ENCODE measurements at regions of chr9 and their contacts with region 1.

Region 1: DNA sequence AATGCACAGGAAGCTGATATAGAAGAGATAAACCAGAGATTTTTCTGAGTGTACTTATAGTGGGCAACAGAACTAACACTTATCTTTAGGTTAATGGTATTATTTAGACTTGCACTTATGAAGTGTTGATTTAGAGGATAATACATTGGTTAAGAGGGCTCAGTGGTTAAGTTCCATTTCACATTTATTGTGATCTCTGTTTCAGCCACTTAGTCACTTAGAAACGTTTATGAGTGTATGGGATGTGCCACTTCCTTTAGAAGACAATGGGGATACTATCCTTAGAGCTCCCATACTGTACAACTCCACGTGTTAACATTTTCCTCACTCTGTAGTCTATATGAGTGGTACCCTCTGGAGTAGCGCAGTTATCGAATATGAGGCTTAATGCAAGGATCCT is 57.5 kb downstream of the PIP5K1B start:
- DNase-seq: no peak
- ATAC-seq: peak; percentile 51; the same call in 2 of the 3 replicates
- H3K4me3 ChIP-seq: no peak overlapping the region
- H3K27ac ChIP-seq: no peak overlapping the region
- H3K4me1 ChIP-seq: peaks cover 3% of the 10 kb centered on the region; the same call in 1 of the 2 replicates
- H3K27me3 ChIP-seq: no peaks in the 10 kb centered on the region
- CTCF ChIP-seq: no peak
- EP300 ChIP-seq: no peak
- POLR2A ChIP-seq: no peak
- RAD21 ChIP-seq: no peak

Region 2: GRCh38 chr9:68715181-68715456 is 47.5 kb before region 1 on chr9:
- CTCF ChIA-PET with region 1: no interaction called
- POLR2A ChIA-PET with region 1: no interaction called
- RAD21 ChIA-PET with region 1: no interaction called
- SMC1A ChIA-PET with region 1: no interaction called
- in situ Hi-C with region 1: no loop called
- intact Hi-C with region 1: no loop called
- DNase-seq: no peak
- ATAC-seq: no peak
- H3K4me3 ChIP-seq: no peak overlapping the region
- H3K27ac ChIP-seq: no peak overlapping the region
- H3K4me1 ChIP-seq: 0 out of 2 replicates have a peak, but pooled peaks cover 3% of the 10 kb centered on the region
- H3K27me3 ChIP-seq: no peaks in the 10 kb centered on the region
- CTCF ChIP-seq: no peak
- EP300 ChIP-seq: no peak
- POLR2A ChIP-seq: no peak
- RAD21 ChIP-seq: no peak

Region 3: GRCh38 chr9:68744426-68744825 is 18.1 kb before region 1 on chr9:
- CTCF ChIA-PET with region 1: interaction called, 3 read pairs
- POLR2A ChIA-PET with region 1: no interaction called
- RAD21 ChIA-PET with region 1: no interaction called
- SMC1A ChIA-PET with region 1: interaction called, 5 read pairs
- in situ Hi-C with region 1: no loop called
- intact Hi-C with region 1: loop called (anchors 2 kb)
- DNase-seq: no peak
- ATAC-seq: no peak
- H3K4me3 ChIP-seq: no peak overlapping the region
- H3K27ac ChIP-seq: no peak overlapping the region
- H3K4me1 ChIP-seq: no peaks in the 10 kb centered on the region
- H3K27me3 ChIP-seq: no peaks in the 10 kb centered on the region
- CTCF ChIP-seq: no peak
- EP300 ChIP-seq: no peak
- POLR2A ChIP-seq: no peak
- RAD21 ChIP-seq: no peak

Region 4: GRCh38 chr9:68822596-68823165 is 60.1 kb after region 1 on chr9:
- CTCF ChIA-PET with region 1: no interaction called
- POLR2A ChIA-PET with region 1: no interaction called
- RAD21 ChIA-PET with region 1: no interaction called
- SMC1A ChIA-PET with region 1: no interaction called
- in situ Hi-C with region 1: loop called (anchors 10 kb)
- intact Hi-C with region 1: no loop called
- DNase-seq: no peak
- ATAC-seq: no peak
- H3K4me3 ChIP-seq: no peak overlapping the region
- H3K27ac ChIP-seq: no peak overlapping the region
- H3K4me1 ChIP-seq: no peaks in the 10 kb centered on the region
- H3K27me3 ChIP-seq: no peaks in the 10 kb centered on the region; a peak in 1 of 4 replicates
- CTCF ChIP-seq: no peak
- EP300 ChIP-seq: no peak
- POLR2A ChIP-seq: no peak
- RAD21 ChIP-seq: no peak

Measured in GM12878 (cell line).